AG04449 (cell line): ENCODE measurements at regions of chr22 and their contacts with region 1.

Region 1: DNA sequence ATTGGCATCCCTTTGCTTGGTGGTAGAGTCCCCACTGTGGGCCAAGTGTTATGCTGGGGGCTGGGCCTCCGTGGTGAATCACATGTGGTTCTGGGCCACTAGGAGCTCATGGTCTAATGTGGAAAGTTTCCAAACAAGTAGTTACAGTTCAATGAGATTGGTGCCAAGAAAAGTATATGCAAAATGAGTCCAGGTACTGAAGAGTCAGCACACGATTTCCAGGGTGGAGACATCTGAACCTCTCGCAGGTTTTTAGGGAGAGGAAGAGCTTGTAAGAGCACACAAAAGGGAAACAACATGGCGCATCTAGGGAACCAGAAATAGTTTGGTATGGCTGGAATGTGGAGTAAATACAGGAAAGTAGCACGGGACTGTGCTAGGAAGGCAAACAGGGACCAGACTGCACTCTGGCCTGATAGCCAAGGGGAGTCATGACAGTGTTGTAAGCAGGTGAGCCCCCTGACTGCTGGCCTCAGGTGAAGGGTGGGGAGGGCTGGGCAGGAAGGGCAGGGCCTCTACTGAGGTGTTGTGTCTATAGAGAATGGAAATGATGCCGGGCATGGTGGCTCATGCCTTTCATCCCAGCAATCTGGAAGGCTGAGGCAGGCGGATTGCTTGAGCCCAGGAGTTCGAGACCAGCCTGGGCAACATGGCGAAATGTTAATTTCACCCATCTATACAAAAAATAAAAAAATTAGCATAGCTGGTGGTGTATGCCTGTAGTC is 12.6 kb downstream of the POLR2F start:
- DNase-seq: no peak
- H3K4me3 ChIP-seq: no peak overlapping the region
- CTCF ChIP-seq: no peak

Region 2: DNA sequence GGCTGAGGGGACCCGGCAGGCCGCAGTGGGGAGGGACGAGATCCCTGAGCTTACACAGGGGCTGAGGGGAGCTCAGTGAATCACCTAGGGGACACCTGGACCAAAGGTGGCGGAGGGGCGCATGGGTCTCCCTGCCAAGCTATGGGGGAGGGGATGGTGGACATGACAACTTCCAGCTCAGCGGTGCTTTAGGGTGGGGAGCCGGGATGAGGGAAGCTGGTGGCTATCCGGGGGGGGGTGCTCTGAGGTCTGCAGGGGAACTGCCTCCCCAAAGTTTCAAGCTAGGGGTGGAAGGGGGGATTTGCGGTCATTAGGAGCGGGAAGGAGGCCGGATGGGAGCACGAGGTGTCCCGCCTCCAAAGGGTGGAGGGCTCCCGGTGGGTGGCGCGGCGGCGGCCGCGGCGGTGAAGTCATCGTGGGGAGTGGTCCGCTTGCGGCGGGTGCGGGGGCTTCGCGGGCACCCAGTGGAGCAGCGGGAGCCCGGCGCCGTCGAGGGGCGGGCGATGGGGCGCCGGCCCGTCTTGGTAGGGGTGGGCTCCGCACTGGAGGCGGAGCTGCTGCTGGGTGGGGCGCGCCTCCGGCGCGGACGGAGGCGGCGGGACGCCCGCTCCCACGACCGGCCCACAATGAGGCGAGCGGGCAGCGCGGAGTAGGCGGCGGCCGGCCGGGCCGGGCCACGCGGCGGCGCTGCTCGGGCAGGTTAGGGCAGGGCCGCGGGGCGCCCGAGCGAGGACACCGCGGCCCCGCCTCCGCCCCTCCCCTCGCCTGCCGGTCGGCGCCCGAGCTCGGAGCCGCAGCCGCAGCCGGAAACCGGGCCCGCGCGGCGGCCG is 60.4 kb before region 1 on chr22 and contains the start of gene MICALL1:
- CTCF ChIA-PET with region 1: interaction called, 14 read pairs
- POLR2A ChIA-PET with region 1: no interaction called
- DNase-seq: no peak
- H3K4me3 ChIP-seq: peak within 1 kb of the TSS; percentile 80
- CTCF ChIP-seq: no peak

Region 3: GRCh38 chr22:37953437-37954179 is 12.5 kb before region 1 on chr22 and contains the starts of genes C22orf23 and POLR2F:
- CTCF ChIA-PET with region 1: interaction called, 94 read pairs
- POLR2A ChIA-PET with region 1: no interaction called
- DNase-seq: peak; percentile 36
- H3K4me3 ChIP-seq: peak within 1 kb of the TSS; percentile 100
- CTCF ChIP-seq: no peak

Region 4: GRCh38 chr22:38040953-38041759 is 75.1 kb after region 1 on chr22:
- CTCF ChIA-PET with region 1: no interaction called
- POLR2A ChIA-PET with region 1: no interaction called
- DNase-seq: no peak
- H3K4me3 ChIP-seq: no peak overlapping the region
- CTCF ChIP-seq: no peak